MCF 10A (cell line): ENCODE measurements at regions of chr1 and their contacts with region 1.

Region 1: GRCh38 chr1:13662493-13662892 is 37.5 kb upstream of the PRDM2 start:
- DNase-seq: peak; percentile 29
- H3K4me3 Mint-ChIP-seq: no peak overlapping the region
- H3K27ac Mint-ChIP-seq: peak overlapping the region; percentile 5
- H3K4me1 Mint-ChIP-seq: peaks cover 36% of the 10 kb centered on the region
- H3K27me3 Mint-ChIP-seq: no peaks in the 10 kb centered on the region
- CTCF ChIP-seq: no peak

Region 2: DNA sequence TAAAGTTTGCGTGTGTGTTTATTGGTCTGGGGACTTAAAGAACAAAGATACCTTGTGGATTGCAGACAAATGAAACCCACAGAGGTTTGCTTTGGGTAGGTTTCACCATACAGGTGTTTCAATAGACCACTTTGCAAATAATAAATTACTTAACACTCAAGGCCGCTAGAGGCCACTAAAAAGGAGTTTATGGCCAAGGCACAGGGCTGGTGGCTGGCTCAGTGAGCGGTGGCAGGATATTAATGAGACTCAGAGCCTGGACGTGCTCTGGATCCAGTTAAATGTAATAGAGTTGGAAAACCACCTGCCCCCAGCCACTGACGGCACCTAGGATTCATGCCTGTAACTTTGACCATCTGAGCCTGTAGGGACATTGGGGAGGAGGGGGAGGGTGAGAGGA is 193.2 kb before region 1 on chr1:
- CTCF ChIA-PET with region 1: no interaction called
- POLR2A ChIA-PET with region 1: no interaction called
- intact Hi-C with region 1: loop called (anchors 2 kb)
- DNase-seq: peak; percentile 55
- H3K4me3 Mint-ChIP-seq: no peak overlapping the region
- H3K27ac Mint-ChIP-seq: no peak overlapping the region
- H3K4me1 Mint-ChIP-seq: no peaks in the 10 kb centered on the region
- H3K27me3 Mint-ChIP-seq: no peaks in the 10 kb centered on the region
- CTCF ChIP-seq: peak; percentile 46

Region 3: GRCh38 chr1:13593511-13594131 is 68.9 kb before region 1 on chr1:
- CTCF ChIA-PET with region 1: interaction called, 5 read pairs
- POLR2A ChIA-PET with region 1: interaction called, 14 read pairs
- intact Hi-C with region 1: loop called (anchors 5 kb)
- DNase-seq: peak; percentile 83
- H3K4me3 Mint-ChIP-seq: peak overlapping the region; percentile 38
- H3K27ac Mint-ChIP-seq: peak overlapping the region; percentile 87
- H3K4me1 Mint-ChIP-seq: peaks cover 61% of the 10 kb centered on the region
- H3K27me3 Mint-ChIP-seq: no peaks in the 10 kb centered on the region
- CTCF ChIP-seq: no peak

Region 4: GRCh38 chr1:13619909-13620308 is 42.6 kb before region 1 on chr1:
- CTCF ChIA-PET with region 1: interaction called, 6 read pairs
- POLR2A ChIA-PET with region 1: interaction called, 66 read pairs
- intact Hi-C with region 1: no loop called
- DNase-seq: peak; percentile 89
- H3K4me3 Mint-ChIP-seq: peak overlapping the region; percentile 26
- H3K27ac Mint-ChIP-seq: peak overlapping the region; percentile 97
- H3K4me1 Mint-ChIP-seq: peaks cover 54% of the 10 kb centered on the region
- H3K27me3 Mint-ChIP-seq: no peaks in the 10 kb centered on the region
- CTCF ChIP-seq: no peak

Region 5: DNA sequence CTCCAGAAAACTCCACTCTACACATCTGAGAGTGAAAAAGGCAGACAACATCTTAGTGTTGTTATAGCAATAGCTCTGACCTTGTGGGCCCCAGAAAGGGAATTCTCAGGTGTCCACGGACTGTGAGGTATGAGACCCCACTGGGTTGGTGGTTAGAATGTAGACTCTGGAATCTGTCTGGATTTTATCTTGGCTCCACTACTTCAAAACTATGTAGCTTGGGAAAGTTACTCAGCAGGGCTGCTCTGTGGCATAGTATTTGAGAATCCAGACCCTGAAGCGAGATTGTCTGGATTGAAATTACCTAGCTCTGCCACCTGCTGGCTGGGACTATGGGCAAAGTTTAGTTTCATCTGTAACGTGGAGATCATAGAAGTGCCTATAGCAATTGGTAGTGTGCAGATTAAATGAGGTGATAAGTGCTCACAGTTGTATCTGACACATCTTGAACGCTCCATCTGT is 63.3 kb after region 1 on chr1:
- CTCF ChIA-PET with region 1: interaction called, 96 read pairs
- POLR2A ChIA-PET with region 1: interaction called, 16 read pairs
- intact Hi-C with region 1: loop called (anchors 1 kb)
- DNase-seq: peak; percentile 60
- H3K4me3 Mint-ChIP-seq: no peak overlapping the region
- H3K27ac Mint-ChIP-seq: no peak overlapping the region
- H3K4me1 Mint-ChIP-seq: peaks cover 20% of the 10 kb centered on the region
- H3K27me3 Mint-ChIP-seq: no peaks in the 10 kb centered on the region
- CTCF ChIP-seq: peak; percentile 57